Dorsolateral prefrontal cortex (tissue), 120 donors: ENCODE measurements at regions of chr1 and their contacts with region 1.

Region 1: DNA sequence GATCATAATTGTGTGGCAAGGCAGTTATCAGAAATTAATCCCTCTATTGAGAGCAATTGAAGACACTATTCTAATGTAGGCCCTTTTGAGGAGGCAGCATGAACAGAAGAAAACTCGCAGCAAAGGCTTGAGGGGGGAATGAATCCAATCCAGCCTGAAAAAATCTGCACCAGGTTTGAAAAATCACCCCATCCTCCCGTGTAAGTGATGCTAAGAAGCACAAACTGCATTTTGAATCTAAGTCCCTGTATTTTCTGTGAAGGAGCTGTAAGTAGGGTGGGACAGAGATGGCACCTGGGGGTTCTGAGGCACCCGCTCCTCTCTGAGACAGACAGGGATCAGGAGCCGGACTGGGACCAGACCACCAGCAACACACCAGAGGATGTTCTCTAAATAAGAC is at the start of gene CRB1:
- DNase-seq: peak in 7 of 10 donors; percentile 10 to 62 (median 32)
- H3K4me3 ChIP-seq: peak within 1 kb of the TSS; percentile 26 to 71 (median 55)
- H3K27ac ChIP-seq: peak within 1 kb of the TSS; percentile 18 to 89 (median 78)
- H3K27me3 ChIP-seq: no peaks in the 10 kb centered on the region
- CTCF ChIP-seq: peak in 2 of 56 donors; percentile 7 to 17
- total RNA-seq, gene CRB1: 12.9 to 50.8 (median 23.3) TPM

Region 2: GRCh38 chr1:197302775-197303174 is 34.8 kb after region 1 on chr1:
- intact Hi-C with region 1: no loop called
- DNase-seq: no peak
- H3K4me3 ChIP-seq: no peak overlapping the region
- H3K27ac ChIP-seq: peak overlapping the region in 7 of 59 donors; percentile 3 to 55 (median 17)
- H3K27me3 ChIP-seq: no peaks in the 10 kb centered on the region
- CTCF ChIP-seq: no peak

Region 3: GRCh38 chr1:197314682-197315081 is 46.7 kb after region 1 on chr1:
- intact Hi-C with region 1: loop called in 1 of 2 experiments (anchors 5 kb)
- DNase-seq: no peak
- H3K4me3 ChIP-seq: peak overlapping the region in 6 of 59 donors; percentile 11 to 37 (median 19)
- H3K27ac ChIP-seq: peak overlapping the region; percentile 40 to 93 (median 84)
- H3K27me3 ChIP-seq: no peaks in the 10 kb centered on the region
- CTCF ChIP-seq: peak in 51 of 56 donors; percentile 7 to 75 (median 50)

Region 4: GRCh38 chr1:197360068-197360467 is 92.1 kb after region 1 on chr1:
- intact Hi-C with region 1: no loop called
- DNase-seq: peak in 1 of 10 donors; percentile 7
- H3K4me3 ChIP-seq: no peak overlapping the region
- H3K27ac ChIP-seq: peak overlapping the region in 6 of 59 donors; percentile 7 to 25 (median 12)
- H3K27me3 ChIP-seq: no peaks in the 10 kb centered on the region
- CTCF ChIP-seq: no peak

Region 5: DNA sequence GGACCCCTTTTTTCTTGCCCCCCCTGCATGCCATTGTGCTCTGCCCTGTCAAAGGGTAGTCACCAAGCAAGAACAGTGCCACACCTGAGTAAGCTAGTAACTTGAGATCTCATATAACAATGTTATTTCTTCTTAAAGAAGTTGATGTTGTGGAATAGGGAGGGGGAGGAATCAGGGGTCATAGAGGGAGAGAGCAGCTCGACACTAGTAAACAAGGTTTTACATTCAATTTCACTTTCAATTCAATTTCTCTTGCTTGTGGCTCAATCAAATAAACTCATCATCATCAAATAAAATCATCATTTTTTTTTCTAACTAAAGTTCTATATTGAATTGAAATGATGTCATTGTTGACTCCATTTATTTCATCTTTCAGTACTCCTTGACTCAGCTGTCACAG is 106.4 kb after region 1 on chr1:
- intact Hi-C with region 1: no loop called
- DNase-seq: no peak
- H3K4me3 ChIP-seq: no peak overlapping the region
- H3K27ac ChIP-seq: no peak overlapping the region
- H3K27me3 ChIP-seq: no peaks in the 10 kb centered on the region
- CTCF ChIP-seq: no peak